IMR-90 (cell line): ENCODE measurements at regions of chr15 and their contacts with region 1.

Region 1: GRCh38 chr15:85044251-85044853 is 62.7 kb downstream of the PDE8A start:
- DNase-seq: peak; percentile 80
- ATAC-seq: peak; percentile 67
- H3K4me3 ChIP-seq: no peak overlapping the region
- H3K27ac ChIP-seq: no peak overlapping the region
- H3K4me1 ChIP-seq: peaks cover 4% of the 10 kb centered on the region
- H3K27me3 ChIP-seq: no peaks in the 10 kb centered on the region
- CTCF ChIP-seq: peak; percentile 75
- POLR2A ChIP-seq: no peak
- RAD21 ChIP-seq: peak; percentile 82

Region 2: DNA sequence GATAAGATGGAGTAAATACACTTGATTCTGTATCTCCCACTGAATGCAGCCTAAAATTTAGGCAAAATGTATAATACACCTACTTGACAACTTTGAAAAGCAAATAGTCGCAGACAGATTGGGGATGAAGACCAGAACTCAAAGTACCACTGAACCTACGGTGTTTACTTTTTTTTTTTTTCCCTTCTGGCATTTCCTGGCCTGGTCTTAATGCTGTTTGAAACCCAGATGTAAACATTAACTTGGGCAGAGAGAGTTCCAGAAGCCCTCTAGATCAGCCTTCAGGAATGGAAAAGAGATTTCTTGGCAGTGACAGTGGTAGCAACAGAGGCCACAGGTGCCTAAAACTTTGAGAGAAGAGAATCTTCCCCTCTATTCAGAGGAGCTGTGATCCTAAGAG is 199.4 kb before region 1 on chr15:
- CTCF ChIA-PET with region 1: no interaction called
- POLR2A ChIA-PET with region 1: no interaction called
- dilution Hi-C with region 1: no loop called
- in situ Hi-C with region 1: no loop called
- intact Hi-C with region 1: loop called (anchors 5 kb)
- DNase-seq: no peak
- ATAC-seq: peak; percentile 53
- H3K4me3 ChIP-seq: no peak overlapping the region
- H3K27ac ChIP-seq: no peak overlapping the region
- H3K4me1 ChIP-seq: peaks cover 1% of the 10 kb centered on the region; the same call in 1 of the 2 replicates
- H3K27me3 ChIP-seq: peaks cover 2% of the 10 kb centered on the region; the same call in 1 of the 2 replicates
- CTCF ChIP-seq: no peak
- POLR2A ChIP-seq: no peak
- RAD21 ChIP-seq: no peak

Region 3: GRCh38 chr15:84894442-84895361 is 149.7 kb before region 1 on chr15:
- CTCF ChIA-PET with region 1: no interaction called
- POLR2A ChIA-PET with region 1: no interaction called
- dilution Hi-C with region 1: no loop called
- in situ Hi-C with region 1: no loop called
- intact Hi-C with region 1: no loop called
- DNase-seq: no peak
- ATAC-seq: no peak
- H3K4me3 ChIP-seq: no peak overlapping the region
- H3K27ac ChIP-seq: no peak overlapping the region
- H3K4me1 ChIP-seq: no peaks in the 10 kb centered on the region
- H3K27me3 ChIP-seq: peaks cover 35% of the 10 kb centered on the region
- CTCF ChIP-seq: no peak
- POLR2A ChIP-seq: no peak
- RAD21 ChIP-seq: no peak

Region 4: DNA sequence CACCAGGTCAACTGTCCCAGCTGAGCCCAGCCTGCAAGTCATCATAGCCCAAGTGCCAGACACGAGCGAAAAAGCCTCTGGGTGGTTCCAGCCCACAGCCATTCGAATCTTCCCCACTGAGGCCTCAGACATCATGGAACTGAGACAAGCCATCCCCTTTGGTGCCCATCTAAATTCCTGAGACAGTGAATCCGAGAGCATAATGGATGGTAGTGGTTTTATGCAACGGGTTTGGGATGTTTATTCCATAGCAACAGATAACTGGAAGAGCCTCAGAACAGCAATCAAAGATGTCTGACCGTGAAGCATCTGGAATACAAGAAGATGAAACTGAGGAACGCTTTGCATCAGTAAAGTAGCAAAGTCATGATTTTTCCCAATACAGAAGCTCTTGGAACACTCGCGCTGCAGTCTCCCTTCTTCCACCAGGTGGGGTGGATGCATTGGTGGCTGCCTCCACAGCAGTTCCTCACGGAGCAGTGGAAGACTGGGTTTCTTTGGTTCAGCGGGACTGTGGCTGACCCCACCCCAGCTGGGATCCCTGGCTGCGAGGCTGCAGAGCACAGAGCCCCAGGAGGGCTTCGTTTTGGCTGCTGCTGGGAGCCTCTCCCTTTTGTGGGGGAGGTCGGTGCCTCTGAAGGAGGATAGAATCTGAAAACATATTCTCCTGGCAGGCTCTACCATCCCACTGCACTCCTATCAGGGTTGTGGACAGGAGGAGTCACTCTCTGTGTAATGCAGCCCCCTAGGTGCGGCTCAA is 89.1 kb before region 1 on chr15:
- CTCF ChIA-PET with region 1: interaction called, 10 read pairs
- POLR2A ChIA-PET with region 1: no interaction called
- dilution Hi-C with region 1: loop called (anchors 10 kb)
- in situ Hi-C with region 1: no loop called
- intact Hi-C with region 1: loop called (anchors 1 kb)
- DNase-seq: peak; percentile 78
- ATAC-seq: peak; percentile 98
- H3K4me3 ChIP-seq: no peak overlapping the region
- H3K27ac ChIP-seq: no peak overlapping the region
- H3K4me1 ChIP-seq: peaks cover 6% of the 10 kb centered on the region
- H3K27me3 ChIP-seq: no peaks in the 10 kb centered on the region
- CTCF ChIP-seq: peak; percentile 87
- POLR2A ChIP-seq: peak; percentile 50; the same call in 1 of the 2 replicates
- RAD21 ChIP-seq: peak; percentile 90

Region 5: DNA sequence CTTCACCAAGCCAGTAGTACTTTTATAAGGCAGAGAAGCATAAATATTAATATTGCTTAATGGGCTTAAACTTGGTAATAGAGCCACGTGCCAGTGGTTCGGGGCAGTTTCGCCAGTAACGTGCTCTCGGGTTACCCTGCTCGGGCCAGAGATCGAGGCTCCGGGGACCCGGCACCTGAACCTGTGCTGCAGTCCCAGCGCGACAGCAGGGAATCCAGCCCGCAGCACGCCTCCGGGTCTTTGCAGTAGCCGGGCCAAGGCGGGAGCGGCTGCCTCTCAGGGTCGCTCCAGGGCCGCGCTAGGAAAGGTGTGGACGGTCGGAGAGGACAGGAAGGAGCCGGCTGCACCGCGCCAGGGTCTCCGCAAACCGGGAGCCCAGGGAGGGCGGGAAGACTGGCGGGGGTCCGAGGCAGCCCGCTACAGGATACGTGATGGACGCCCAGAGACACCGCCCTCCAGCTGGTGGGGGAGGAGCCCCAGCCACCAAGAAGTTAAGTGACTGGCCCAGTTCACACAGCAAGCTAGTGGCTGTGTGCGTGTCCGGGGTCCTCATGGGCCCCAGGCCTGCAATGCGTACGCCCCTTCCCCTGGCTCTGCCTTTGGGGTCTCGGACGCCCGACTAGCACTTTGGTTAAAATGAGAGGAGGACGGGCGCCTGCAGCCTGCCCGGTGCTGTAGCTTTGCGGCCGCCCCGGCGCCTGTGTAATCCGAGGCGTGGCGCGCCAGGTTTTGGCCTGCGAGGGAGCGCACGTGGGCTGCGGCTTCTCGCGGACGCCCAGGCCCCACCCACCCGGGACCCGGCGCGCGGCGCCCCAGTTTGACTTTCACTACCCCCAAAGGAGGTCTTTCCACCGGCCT is 63.9 kb before region 1 on chr15:
- CTCF ChIA-PET with region 1: interaction called, 7 read pairs
- POLR2A ChIA-PET with region 1: interaction called, 3 read pairs
- dilution Hi-C with region 1: no loop called
- in situ Hi-C with region 1: no loop called
- intact Hi-C with region 1: loop called (anchors 2 kb)
- DNase-seq: peak; percentile 74
- ATAC-seq: peak; percentile 69
- H3K4me3 ChIP-seq: peak overlapping the region; percentile 88
- H3K27ac ChIP-seq: peak overlapping the region; percentile 82
- H3K4me1 ChIP-seq: peaks cover 3% of the 10 kb centered on the region
- H3K27me3 ChIP-seq: no peaks in the 10 kb centered on the region
- CTCF ChIP-seq: no peak
- POLR2A ChIP-seq: peak; percentile 81
- RAD21 ChIP-seq: no peak